GM12878 (cell line): ENCODE measurements at regions of chr6 and their contacts with region 1.

Region 1: DNA sequence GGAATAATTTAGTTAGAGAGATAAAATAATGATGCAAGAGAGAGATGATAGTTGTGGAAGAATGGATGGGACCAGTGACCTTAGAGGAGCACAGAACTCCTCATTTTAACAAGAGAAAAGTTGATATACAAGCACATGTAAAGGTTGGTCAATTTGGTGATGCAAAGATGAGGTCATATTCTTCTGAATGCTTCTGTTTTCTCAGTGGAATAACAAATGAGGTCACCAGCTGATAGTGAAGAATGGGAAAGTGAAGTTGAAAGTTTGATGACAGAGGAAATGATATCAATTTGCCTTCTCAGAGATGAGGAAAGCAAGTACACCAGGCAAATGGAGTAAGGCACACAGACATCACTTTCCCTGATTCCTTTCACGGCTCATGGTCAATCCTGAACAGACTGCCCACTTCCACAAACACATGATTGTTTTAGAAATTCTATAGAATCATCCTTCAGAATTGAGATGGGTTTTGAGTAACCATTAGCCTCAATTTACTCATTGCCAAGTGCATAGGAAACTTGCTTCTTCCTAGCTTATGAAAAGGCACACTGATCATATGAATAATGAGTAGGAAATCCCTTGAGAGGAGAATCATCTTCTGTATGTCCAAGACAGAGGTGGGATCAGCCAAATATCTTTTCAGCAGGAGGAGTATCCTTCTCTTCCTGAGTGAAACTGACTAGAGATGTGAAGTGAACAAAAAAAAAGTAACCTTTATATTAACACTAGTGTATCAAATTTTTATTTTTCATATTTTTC is 82.4 kb upstream of the TCF21 start:
- DNase-seq: no peak
- ATAC-seq: no peak
- H3K4me3 ChIP-seq: no peak overlapping the region
- H3K27ac ChIP-seq: no peak overlapping the region
- H3K4me1 ChIP-seq: no peaks in the 10 kb centered on the region
- H3K27me3 ChIP-seq: no peaks in the 10 kb centered on the region; a peak in 1 of 4 replicates
- CTCF ChIP-seq: no peak
- EP300 ChIP-seq: no peak
- POLR2A ChIP-seq: no peak
- RAD21 ChIP-seq: no peak

Region 2: DNA sequence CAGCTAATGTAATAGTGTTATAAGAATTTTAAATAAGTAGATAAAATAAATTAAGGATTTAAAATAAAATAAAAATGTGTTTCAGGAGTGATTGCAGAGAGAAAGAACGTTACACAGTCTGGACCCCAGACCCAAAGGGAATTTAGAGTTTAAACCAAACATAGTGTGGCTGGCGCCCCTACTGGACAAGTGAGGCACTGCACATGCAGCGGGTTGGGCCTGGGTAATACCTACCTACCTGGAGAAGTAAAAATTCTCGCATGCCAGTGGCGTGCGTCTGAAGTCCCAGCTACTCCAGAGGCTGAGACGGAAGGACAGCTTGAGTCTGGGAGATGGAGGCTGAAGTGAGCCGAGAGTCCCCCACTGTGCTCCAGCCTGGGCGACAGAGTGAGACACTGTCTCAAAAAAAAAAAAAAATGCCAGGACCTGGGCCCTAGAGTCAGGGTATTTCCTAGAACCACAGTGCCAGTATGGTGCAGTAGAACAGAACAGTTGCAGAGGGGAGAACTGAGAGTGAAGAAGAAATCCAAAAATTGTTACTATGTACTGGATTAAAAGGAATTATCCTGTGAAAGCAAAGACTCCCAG is 11.0 kb after region 1 on chr6:
- CTCF ChIA-PET with region 1: interaction called, 12 read pairs
- POLR2A ChIA-PET with region 1: interaction called, 3 read pairs
- RAD21 ChIA-PET with region 1: no interaction called
- SMC1A ChIA-PET with region 1: interaction called, 3 read pairs
- in situ Hi-C with region 1: no loop called
- intact Hi-C with region 1: no loop called
- DNase-seq: no peak
- ATAC-seq: peak; percentile 74
- H3K4me3 ChIP-seq: no peak overlapping the region
- H3K27ac ChIP-seq: no peak overlapping the region
- H3K4me1 ChIP-seq: no peaks in the 10 kb centered on the region
- H3K27me3 ChIP-seq: no peaks in the 10 kb centered on the region
- CTCF ChIP-seq: peak; percentile 48 to 89 (median 74)
- EP300 ChIP-seq: no peak
- POLR2A ChIP-seq: no peak
- RAD21 ChIP-seq: no peak